ENCODE measurements at regions of chr10 and their contacts with region 1.

Region 1: GRCh38 chr10:89954787-89955566 is 253.6 kb downstream of the KIF20B start:
- DNase-seq: no peak
- H3K4me3 Mint-ChIP-seq: no peak overlapping the region
- H3K27ac Mint-ChIP-seq: no peak overlapping the region
- H3K4me1 Mint-ChIP-seq: peaks cover 2% of the 10 kb centered on the region
- H3K27me3 Mint-ChIP-seq: peaks cover 10% of the 10 kb centered on the region

Region 2: DNA sequence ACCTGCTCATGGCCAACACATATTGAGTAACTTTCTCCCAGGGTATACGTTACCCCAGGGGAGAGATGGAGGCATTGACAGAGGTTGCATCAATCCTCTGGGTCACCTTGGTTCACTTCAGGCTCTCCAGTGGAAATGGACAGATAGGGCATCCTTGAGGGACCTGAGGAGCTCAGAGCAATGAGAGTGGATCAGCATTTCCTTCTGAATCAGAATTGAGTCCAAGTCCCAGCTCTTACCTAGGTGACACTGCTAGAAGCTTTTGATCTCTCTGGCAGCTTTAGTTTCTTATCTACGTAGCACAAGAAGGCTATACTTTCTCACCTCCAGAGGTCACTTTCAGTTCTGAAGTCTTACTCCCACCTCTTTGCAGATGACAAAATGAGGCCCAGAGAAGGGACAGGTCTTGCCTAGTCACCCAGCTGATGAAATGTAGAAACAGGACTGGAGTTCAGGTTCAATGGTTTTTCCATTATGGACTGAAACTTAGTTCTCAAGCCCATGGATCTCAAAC is 345.1 kb before region 1 on chr10:
- CTCF ChIA-PET with region 1: no interaction called
- intact Hi-C with region 1: no loop called
- DNase-seq: peak; percentile 13
- H3K4me3 Mint-ChIP-seq: no peak overlapping the region
- H3K27ac Mint-ChIP-seq: no peak overlapping the region
- H3K4me1 Mint-ChIP-seq: peaks cover 11% of the 10 kb centered on the region
- H3K27me3 Mint-ChIP-seq: no peaks in the 10 kb centered on the region

Region 3: DNA sequence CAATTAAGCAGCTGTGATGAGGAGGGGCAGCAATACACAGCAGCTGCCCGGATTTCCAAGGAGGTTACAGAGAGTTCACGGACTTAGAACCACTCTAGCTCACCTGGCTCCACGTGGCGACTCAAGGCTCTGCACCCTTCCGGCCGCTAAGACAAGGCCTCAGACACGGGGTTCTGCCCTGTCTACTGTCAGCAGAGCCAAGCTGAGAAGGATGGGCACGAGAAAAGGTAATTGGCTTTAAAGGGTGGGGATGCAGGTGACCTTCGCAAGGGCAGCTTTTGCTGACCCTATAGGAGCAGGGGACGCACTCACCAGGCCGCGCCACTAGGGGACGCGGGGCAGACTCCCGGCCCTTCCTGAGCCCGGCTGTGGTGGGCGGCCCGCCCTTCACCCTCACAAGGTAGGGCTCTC is 101.2 kb before region 1 on chr10:
- CTCF ChIA-PET with region 1: no interaction called
- intact Hi-C with region 1: no loop called
- DNase-seq: no peak
- H3K4me3 Mint-ChIP-seq: no peak overlapping the region
- H3K27ac Mint-ChIP-seq: no peak overlapping the region
- H3K4me1 Mint-ChIP-seq: no peaks in the 10 kb centered on the region
- H3K27me3 Mint-ChIP-seq: peaks cover 7% of the 10 kb centered on the region

Region 4: GRCh38 chr10:89973326-89973725 is 18.3 kb after region 1 on chr10:
- CTCF ChIA-PET with region 1: no interaction called
- intact Hi-C with region 1: no loop called
- DNase-seq: no peak
- H3K4me3 Mint-ChIP-seq: no peak overlapping the region
- H3K27ac Mint-ChIP-seq: no peak overlapping the region
- H3K4me1 Mint-ChIP-seq: peaks cover 10% of the 10 kb centered on the region
- H3K27me3 Mint-ChIP-seq: peaks cover 6% of the 10 kb centered on the region

Region 5: DNA sequence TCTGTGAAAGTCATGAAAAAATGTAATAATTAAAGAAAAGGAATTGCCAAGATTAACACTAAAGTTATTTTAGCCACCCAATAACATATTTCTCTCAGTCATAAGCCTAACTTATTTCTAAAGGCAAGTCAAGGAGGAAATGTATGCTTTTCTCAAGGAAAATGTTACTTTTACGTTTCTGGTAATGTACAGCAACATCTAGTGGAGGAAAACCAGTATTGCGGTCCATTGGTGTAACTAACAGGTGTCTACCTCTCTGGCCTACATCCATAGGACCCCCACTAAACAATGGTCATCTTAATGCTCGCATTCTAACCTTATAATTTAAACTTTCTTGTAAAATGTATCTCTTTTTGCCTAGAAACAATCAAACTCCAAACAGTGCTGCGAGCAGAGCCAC is 183.9 kb after region 1 on chr10:
- CTCF ChIA-PET with region 1: interaction called, 3 read pairs
- intact Hi-C with region 1: loop called (anchors 2 kb)
- DNase-seq: no peak
- H3K4me3 Mint-ChIP-seq: no peak overlapping the region
- H3K27ac Mint-ChIP-seq: no peak overlapping the region
- H3K4me1 Mint-ChIP-seq: no peaks in the 10 kb centered on the region
- H3K27me3 Mint-ChIP-seq: peaks cover 3% of the 10 kb centered on the region

Region 6: DNA sequence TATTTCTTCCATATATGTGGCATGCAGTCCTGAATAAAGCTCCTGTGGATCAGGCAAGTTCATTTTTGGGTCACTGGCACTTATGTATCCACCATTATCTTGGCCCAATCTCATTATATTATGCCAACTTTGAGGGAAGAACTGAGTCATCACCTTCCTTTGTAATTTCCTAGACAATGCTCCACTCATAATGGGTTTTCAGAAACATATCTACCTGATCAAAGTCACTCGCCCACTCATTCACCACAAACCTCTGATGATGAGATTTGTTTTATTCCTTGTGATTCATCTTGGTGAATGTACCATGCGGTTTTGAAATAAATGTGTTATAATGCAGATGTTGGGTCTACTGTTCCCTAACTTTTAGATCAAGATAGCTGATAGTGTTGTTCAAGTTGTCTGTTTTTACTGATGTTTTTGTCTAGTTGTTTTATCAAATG is 272.3 kb after region 1 on chr10:
- CTCF ChIA-PET with region 1: no interaction called
- intact Hi-C with region 1: loop called (anchors 1 kb)
- DNase-seq: peak; percentile 82
- H3K4me3 Mint-ChIP-seq: no peak overlapping the region
- H3K27ac Mint-ChIP-seq: no peak overlapping the region
- H3K4me1 Mint-ChIP-seq: peaks cover 13% of the 10 kb centered on the region
- H3K27me3 Mint-ChIP-seq: peaks cover 26% of the 10 kb centered on the region

Region 7: GRCh38 chr10:90718182-90718581 is 763.2 kb after region 1 on chr10:
- CTCF ChIA-PET with region 1: no interaction called
- intact Hi-C with region 1: loop called (anchors 10 kb)
- DNase-seq: no peak
- H3K4me3 Mint-ChIP-seq: no peak overlapping the region
- H3K27ac Mint-ChIP-seq: no peak overlapping the region
- H3K4me1 Mint-ChIP-seq: peaks cover 4% of the 10 kb centered on the region
- H3K27me3 Mint-ChIP-seq: no peaks in the 10 kb centered on the region

Region 8: GRCh38 chr10:90787393-90788198 is 832.6 kb after region 1 on chr10:
- CTCF ChIA-PET with region 1: no interaction called
- intact Hi-C with region 1: loop called (anchors 1 kb)
- DNase-seq: peak; percentile 48
- H3K4me3 Mint-ChIP-seq: no peak overlapping the region
- H3K27ac Mint-ChIP-seq: no peak overlapping the region
- H3K4me1 Mint-ChIP-seq: no peaks in the 10 kb centered on the region
- H3K27me3 Mint-ChIP-seq: peaks cover 4% of the 10 kb centered on the region